ENCODE measurements at regions of chr7 and their contacts with region 1.

Region 1: GRCh38 chr7:105759670-105760550 is 116.5 kb downstream of the ATXN7L1 start:
- DNase-seq: peak; percentile 71
- H3K4me3 Mint-ChIP-seq: no peak overlapping the region
- H3K27ac Mint-ChIP-seq: no peak overlapping the region
- H3K4me1 Mint-ChIP-seq: peaks cover 21% of the 10 kb centered on the region
- H3K27me3 Mint-ChIP-seq: peaks cover 19% of the 10 kb centered on the region

Region 2: DNA sequence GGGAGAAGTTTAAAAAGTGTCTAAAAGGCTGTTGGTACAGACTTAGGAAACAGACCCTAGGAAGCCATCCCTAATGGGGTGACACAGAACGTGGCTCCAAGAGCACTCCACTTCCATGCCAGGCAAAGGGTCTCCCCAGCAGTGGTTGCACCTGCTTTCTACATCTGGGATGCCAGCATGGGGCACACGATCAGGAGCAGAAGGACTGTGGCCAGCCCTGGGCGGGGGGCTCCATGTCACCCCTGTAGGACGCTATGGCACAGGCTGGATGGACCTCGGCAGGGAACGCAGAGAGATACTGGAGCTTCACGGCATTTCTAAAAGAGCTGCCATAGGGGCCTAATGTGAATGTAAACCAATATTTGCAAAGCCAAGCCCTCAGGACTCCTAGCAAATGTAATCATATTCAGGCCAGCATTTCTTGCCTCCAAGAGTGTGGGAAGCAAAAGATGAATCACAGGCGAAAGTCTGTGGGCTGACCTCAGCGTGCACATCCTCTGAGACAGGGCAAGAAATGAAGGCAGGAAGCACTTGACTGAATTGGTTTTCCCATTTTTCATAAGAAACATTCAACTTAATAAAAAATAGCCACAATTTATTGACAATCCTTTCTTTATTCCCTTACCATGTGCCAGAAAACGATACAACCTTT is 22.6 kb after region 1 on chr7:
- intact Hi-C with region 1: loop called (anchors 2 kb)
- DNase-seq: peak; percentile 64
- H3K4me3 Mint-ChIP-seq: no peak overlapping the region
- H3K27ac Mint-ChIP-seq: no peak overlapping the region
- H3K4me1 Mint-ChIP-seq: peaks cover 13% of the 10 kb centered on the region
- H3K27me3 Mint-ChIP-seq: peaks cover 32% of the 10 kb centered on the region

Region 3: GRCh38 chr7:105857009-105857952 is 97.4 kb after region 1 on chr7:
- intact Hi-C with region 1: no loop called
- DNase-seq: no peak
- H3K4me3 Mint-ChIP-seq: no peak overlapping the region
- H3K27ac Mint-ChIP-seq: no peak overlapping the region
- H3K4me1 Mint-ChIP-seq: peaks cover 13% of the 10 kb centered on the region
- H3K27me3 Mint-ChIP-seq: peaks cover 12% of the 10 kb centered on the region

Region 4: GRCh38 chr7:106009403-106010226 is 249.7 kb after region 1 on chr7:
- intact Hi-C with region 1: loop called (anchors 1 kb)
- DNase-seq: peak; percentile 94
- H3K4me3 Mint-ChIP-seq: no peak overlapping the region
- H3K27ac Mint-ChIP-seq: no peak overlapping the region
- H3K4me1 Mint-ChIP-seq: peaks cover 10% of the 10 kb centered on the region
- H3K27me3 Mint-ChIP-seq: peaks cover 50% of the 10 kb centered on the region

Region 5: DNA sequence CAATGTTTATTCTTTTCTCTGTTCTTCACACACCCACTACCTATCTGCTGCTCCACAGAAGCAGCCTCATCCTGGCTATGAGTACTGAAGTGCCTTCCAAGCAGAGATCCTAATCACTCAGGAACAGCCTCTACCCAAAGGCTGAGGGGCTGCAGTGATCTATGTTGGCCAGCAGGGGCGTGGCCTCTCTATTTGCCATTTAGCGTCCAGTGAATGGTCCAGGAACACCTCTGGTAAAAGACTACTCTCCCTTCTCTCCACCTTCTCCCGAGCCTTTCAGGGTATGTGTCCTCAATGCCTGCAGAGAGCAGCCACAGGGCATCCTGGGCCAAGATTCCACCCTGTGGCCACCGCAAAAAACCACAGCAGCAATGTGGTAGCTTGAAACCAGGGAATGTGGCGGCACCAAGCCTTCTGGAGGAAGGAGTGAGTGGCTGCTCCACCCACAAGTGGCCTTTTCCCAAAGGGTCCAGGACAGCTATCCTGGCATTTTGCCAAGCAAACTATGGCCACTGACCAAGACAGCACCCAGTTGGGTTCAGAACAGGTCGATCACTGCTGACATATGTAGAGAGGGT is 281.3 kb after region 1 on chr7:
- intact Hi-C with region 1: loop called (anchors 1 kb)
- DNase-seq: peak; percentile 73
- H3K4me3 Mint-ChIP-seq: no peak overlapping the region
- H3K27ac Mint-ChIP-seq: no peak overlapping the region
- H3K4me1 Mint-ChIP-seq: peaks cover 9% of the 10 kb centered on the region
- H3K27me3 Mint-ChIP-seq: peaks cover 32% of the 10 kb centered on the region

Region 6: GRCh38 chr7:106153891-106154449 is 394.1 kb after region 1 on chr7:
- intact Hi-C with region 1: loop called (anchors 10 kb)
- DNase-seq: peak; percentile 91
- H3K4me3 Mint-ChIP-seq: no peak overlapping the region
- H3K27ac Mint-ChIP-seq: no peak overlapping the region
- H3K4me1 Mint-ChIP-seq: peaks cover 12% of the 10 kb centered on the region
- H3K27me3 Mint-ChIP-seq: peaks cover 34% of the 10 kb centered on the region